H1 (cell line): ENCODE measurements at regions of chr17 and their contacts with region 1.

Region 1: GRCh38 chr17:43483674-43484372 is at the start of gene DHX8:
- DNase-seq: peak; percentile 95 to 99
- H3K4me3 ChIP-seq: peak within 1 kb of the TSS; percentile 61 to 84 (median 78)
- H3K27ac ChIP-seq: peak within 1 kb of the TSS; percentile 79
- H3K4me1 ChIP-seq: peaks cover 0 to 6% (median under 1%) of the 10 kb centered on the region in 4 experiments; a peak in 4 of 7 replicates
- H3K27me3 ChIP-seq: no peaks in the 10 kb centered on the region
- CTCF ChIP-seq: peak; percentile 100
- EP300 ChIP-seq: peak in 1 of 2 experiments; percentile 68; a peak in 1 of 3 replicates
- POLR2A ChIP-seq: peak; percentile 77 to 94
- RAD21 ChIP-seq: peak; percentile 100
- total RNA-seq, gene DHX8: 57.0 and 59.4 TPM in 2 replicates

Region 2: GRCh38 chr17:43330876-43331639 is 152.8 kb before region 1 on chr17:
- CTCF ChIA-PET with region 1: interaction called, 18 read pairs
- POLR2A ChIA-PET with region 1: no interaction called
- DNase-seq: no peak
- H3K4me3 ChIP-seq: no peak overlapping the region
- H3K27ac ChIP-seq: no peak overlapping the region
- H3K4me1 ChIP-seq: peaks cover 0 to 2% (median 0%) of the 10 kb centered on the region in 4 experiments; a peak in 2 of 7 replicates
- H3K27me3 ChIP-seq: no peaks in the 10 kb centered on the region
- CTCF ChIP-seq: no peak
- EP300 ChIP-seq: no peak
- POLR2A ChIP-seq: no peak
- RAD21 ChIP-seq: peak in 1 of 2 experiments; percentile 22; a peak in 1 of 4 replicates

Region 3: GRCh38 chr17:43393944-43394482 is 89.8 kb before region 1 on chr17:
- CTCF ChIA-PET with region 1: interaction called, 296 read pairs
- POLR2A ChIA-PET with region 1: interaction called, 62 read pairs
- DNase-seq: peak in 1 of 2 experiments; percentile 97
- H3K4me3 ChIP-seq: no peak overlapping the region
- H3K27ac ChIP-seq: no peak overlapping the region
- H3K4me1 ChIP-seq: peaks cover 0 to 3% (median 0%) of the 10 kb centered on the region in 4 experiments; a peak in 3 of 7 replicates
- H3K27me3 ChIP-seq: no peaks in the 10 kb centered on the region
- CTCF ChIP-seq: peak; percentile 56 to 91 (median 91)
- EP300 ChIP-seq: no peak
- POLR2A ChIP-seq: no peak
- RAD21 ChIP-seq: peak; percentile 97

Region 4: DNA sequence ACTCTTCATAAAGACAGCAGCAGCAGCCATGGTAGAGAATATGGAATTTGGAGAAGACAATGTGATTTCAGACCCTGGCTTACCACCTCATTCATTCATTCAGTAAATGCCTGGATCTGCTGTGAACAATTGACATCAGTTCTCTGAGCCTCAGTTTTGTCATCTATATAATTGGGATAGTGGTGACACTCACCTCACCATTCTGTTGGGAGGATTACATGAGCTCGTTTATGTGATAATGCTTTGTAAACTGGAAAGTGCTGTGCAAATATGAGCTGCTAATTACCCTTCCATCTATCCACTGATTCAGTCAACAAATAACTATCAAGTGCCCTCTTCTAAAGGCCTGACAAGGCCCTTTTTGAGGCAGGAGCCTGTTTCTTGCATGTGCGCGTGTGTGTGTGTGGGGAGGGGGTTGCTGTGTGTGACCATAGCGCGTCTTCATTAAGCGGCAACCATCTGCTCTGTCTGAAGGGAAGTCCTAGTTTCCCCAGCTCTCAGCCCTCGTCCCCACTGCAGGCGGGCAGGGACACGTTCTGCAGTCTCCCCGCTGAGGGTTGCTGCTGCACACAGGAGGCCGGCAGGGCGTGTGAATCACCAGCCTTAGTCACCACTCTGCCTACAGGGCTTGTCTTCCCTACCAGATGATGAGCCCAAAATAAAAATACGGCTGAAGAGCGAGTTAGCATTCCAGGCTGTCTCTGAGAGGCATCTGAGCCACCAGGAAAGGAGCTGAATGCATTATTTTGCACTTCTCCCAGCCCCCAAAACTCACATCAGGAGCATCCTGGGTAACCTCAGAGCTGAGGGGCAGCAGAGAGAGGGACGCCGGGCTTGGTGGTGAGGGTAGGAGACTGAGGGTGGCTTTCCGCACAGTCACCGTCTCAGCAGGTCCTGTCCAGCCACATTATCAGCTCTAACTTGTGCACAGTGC is 65.1 kb before region 1 on chr17:
- CTCF ChIA-PET with region 1: interaction called, 20 read pairs
- POLR2A ChIA-PET with region 1: interaction called, 3 read pairs
- DNase-seq: no peak
- H3K4me3 ChIP-seq: no peak overlapping the region
- H3K27ac ChIP-seq: no peak overlapping the region
- H3K4me1 ChIP-seq: peaks cover 0 to 5% (median 0%) of the 10 kb centered on the region in 4 experiments; a peak in 2 of 7 replicates
- H3K27me3 ChIP-seq: no peaks in the 10 kb centered on the region
- CTCF ChIP-seq: no peak; a peak in 1 of 4 replicates
- EP300 ChIP-seq: no peak
- POLR2A ChIP-seq: no peak
- RAD21 ChIP-seq: no peak

Region 5: DNA sequence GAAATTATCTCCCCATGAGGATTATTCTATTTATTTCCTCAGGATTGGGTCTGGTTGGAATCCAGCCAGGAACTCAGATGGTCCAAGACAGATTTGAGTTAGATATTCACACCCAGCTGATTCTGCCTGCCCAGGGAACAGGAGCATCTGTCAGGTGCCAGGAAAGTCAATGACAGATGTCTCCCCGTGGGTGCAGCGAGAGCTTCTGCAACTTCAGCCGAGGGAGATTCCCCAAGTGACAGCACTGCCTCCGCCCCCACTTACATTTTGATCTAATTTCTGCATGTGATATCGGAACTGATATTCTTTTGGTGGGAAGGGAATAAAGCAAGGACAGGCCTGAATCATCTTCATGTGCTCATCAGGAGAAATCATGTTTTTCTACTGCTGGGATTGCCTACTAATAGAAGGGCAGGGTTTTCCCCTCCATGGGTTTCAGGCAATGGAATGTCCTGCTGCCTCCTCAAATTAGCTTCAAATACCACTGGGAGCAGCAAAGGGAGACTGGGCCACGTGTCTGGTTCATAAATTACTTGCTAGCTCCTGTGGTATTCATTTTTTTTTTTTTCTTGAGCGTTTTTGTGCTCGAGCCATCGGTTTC is 15.7 kb before region 1 on chr17:
- CTCF ChIA-PET with region 1: interaction called, 14 read pairs
- POLR2A ChIA-PET with region 1: interaction called, 6 read pairs
- DNase-seq: no peak
- H3K4me3 ChIP-seq: no peak overlapping the region
- H3K27ac ChIP-seq: no peak overlapping the region
- H3K4me1 ChIP-seq: no peaks in the 10 kb centered on the region
- H3K27me3 ChIP-seq: no peaks in the 10 kb centered on the region
- CTCF ChIP-seq: no peak
- EP300 ChIP-seq: no peak
- POLR2A ChIP-seq: no peak
- RAD21 ChIP-seq: no peak

Region 6: GRCh38 chr17:43570518-43570928 is 86.7 kb after region 1 on chr17:
- CTCF ChIA-PET with region 1: no interaction called
- POLR2A ChIA-PET with region 1: no interaction called
- DNase-seq: no peak
- H3K4me3 ChIP-seq: no peak overlapping the region
- H3K27ac ChIP-seq: no peak overlapping the region
- H3K4me1 ChIP-seq: no peaks in the 10 kb centered on the region
- H3K27me3 ChIP-seq: no peaks in the 10 kb centered on the region
- CTCF ChIP-seq: no peak
- EP300 ChIP-seq: no peak
- POLR2A ChIP-seq: no peak
- RAD21 ChIP-seq: no peak